Dendritic cell treated with granulocyte-macrophage colony-stimulating factor and Interleukin-4, amounts not matched to agents 40 ng/mL and 50 ng/mL, for 4 days (primary cell): ENCODE measurements at regions of chr20 and their contacts with region 1.

Region 1: DNA sequence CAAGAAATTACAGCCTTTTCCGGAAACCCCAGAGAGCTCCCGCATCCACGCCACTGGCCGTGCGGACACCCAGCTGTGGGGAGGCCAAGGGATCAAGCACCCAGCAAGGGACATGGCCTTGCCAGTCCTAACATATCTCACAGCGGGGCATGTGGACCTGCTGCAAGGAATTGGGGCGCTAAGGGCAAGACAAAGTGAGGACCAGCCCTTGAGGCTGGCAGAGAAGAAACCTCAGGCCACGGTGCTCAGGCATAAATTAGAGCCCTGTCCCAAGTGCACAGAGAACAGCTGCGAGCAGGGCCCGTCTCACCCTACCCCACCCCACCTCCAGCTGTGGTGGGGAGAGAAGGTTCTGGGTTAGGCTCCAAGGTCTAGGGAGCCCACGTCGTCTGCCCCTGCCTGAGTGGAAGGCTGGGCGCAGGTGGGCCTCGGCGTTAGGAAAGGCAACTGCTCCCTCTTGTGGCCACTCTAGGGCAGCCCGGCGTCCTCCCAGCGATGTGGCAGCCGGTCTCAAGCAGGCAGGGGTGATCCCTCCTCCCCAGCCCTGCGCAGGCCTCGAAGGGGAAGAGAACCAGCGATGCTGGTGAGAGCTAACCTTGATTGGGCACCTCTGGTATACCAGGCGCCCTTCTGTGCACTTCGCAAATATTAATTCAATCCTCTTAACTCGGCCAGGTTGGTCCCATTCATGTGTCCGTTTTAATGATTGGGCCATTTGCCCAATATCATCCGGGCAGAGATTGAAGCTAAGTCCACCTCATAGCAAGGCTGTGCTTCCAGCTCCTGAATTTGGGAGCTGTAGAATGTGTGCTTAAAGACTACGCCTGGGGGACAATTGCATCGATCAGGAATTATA is 235.8 kb downstream of the NFATC2 start:
- H3K4me3 Mint-ChIP-seq: no peak overlapping the region
- H3K27ac Mint-ChIP-seq: no peak overlapping the region
- H3K4me1 Mint-ChIP-seq: peaks cover 4% of the 10 kb centered on the region
- H3K27me3 Mint-ChIP-seq: peaks cover 14% of the 10 kb centered on the region

Region 2: DNA sequence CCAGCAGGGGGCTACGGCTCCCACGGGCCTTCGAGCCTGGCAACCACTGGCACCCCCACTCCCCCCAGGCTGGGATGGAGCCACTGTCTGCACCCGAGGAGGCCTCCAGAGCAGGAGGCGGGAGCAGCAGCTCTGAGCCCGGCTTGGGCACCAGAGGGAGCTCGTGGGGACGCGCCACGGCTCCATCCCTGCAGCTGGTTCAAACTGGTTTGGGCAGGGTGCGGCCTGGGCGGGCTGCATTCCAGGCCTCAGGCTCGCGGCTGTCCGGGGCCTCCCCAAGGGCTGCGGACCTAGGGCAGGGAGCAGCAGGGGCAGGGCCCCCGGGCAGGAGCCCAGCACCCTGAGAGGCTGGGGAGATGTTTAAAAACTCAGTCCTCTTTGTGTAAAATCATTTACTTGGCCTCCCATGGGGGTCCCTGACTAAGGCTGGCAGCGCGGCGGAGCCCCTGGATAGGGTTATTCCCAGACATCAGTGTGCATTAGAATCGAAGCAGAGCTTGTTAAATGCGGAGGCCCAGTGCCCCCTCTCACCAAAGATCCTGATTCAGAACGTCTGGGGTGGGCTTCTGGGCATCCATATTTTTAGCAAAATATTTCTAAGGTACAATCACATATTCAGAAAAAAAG is 516.0 kb before region 1 on chr20:
- intact Hi-C with region 1: loop called (anchors 10 kb)
- H3K4me3 Mint-ChIP-seq: no peak overlapping the region
- H3K27ac Mint-ChIP-seq: peak overlapping the region; percentile 75
- H3K4me1 Mint-ChIP-seq: peaks cover 17% of the 10 kb centered on the region
- H3K27me3 Mint-ChIP-seq: peaks cover 18% of the 10 kb centered on the region

Region 3: DNA sequence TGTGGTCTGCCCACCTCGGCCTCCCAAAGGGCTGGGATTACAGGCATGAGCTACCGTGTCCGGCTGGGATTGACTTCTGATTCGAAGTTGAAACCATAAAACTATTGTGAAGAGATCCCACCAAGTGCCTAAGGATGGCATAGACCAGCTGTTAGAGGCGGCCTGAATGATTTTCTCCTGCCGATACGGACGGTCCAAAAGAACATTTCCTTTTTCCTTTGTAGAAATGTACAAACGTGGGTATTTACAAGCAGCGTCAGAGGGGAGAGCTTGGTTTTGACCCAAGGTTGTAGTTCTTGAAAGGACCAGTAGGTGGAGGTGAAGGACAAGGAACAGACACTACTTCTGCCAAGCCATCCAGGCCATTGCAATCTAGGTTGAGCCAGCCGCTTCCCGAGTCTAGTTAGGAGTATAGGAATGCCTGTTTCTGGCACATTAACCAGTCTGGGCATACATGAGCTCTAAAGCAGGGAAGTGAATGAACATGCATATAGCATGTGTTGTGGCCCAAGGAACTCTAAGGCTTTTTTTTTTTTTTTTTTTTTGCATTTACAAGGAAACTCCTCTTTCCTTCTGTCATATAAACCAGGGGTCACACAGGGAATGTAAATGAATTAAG is 319.0 kb before region 1 on chr20:
- intact Hi-C with region 1: loop called (anchors 2 kb)
- H3K4me3 Mint-ChIP-seq: no peak overlapping the region
- H3K27ac Mint-ChIP-seq: no peak overlapping the region
- H3K4me1 Mint-ChIP-seq: peaks cover 7% of the 10 kb centered on the region
- H3K27me3 Mint-ChIP-seq: peaks cover 26% of the 10 kb centered on the region

Region 4: DNA sequence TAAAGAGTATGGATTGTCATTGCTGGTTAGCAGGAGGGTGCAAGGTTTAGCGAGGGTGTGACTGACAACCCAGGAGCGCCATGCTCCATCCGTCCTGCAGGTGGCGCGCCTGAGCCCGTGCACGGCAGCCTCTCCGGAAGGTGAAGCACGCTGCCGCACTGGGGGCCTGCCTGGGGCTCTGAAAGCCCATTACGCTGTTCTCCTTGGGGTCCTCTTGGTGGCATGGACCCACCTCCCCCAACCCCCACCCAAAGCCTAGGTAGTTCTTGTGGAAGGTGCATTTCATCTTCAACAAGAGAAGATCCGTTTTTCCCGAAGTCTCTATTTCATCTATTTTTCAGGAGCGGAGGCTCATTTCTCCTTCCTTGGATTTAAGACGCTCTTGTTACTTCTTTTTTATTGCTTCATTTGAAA is 86.4 kb before region 1 on chr20:
- intact Hi-C with region 1: loop called (anchors 5 kb)
- H3K4me3 Mint-ChIP-seq: no peak overlapping the region
- H3K27ac Mint-ChIP-seq: no peak overlapping the region
- H3K4me1 Mint-ChIP-seq: peaks cover 25% of the 10 kb centered on the region
- H3K27me3 Mint-ChIP-seq: peaks cover 28% of the 10 kb centered on the region

Region 5: DNA sequence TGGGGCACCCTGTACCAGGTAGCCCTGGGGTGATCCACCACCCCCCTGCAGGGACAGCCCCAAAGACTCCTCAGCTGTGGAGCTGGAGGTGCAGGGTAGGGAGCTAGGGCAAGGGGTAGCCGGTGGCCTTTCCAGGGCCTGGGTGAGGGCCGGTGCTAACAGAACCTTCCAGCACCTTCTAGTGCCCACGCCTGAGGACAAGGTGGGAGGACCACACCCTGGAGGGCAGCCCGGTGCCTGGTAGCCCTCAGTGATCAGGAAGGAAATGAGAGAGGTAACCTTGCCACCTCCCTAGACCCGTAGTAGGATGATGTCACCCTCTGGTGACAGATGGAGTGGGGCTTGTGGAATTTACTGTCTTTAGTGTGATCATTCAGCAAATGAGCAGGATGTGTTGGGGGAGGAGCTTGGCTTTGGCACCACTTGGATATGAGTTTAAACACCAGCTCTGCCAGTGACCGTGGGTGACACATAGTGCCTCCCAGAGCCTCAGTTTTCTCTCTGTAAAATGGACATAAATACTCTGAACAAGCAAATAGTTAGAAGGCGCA is 48.1 kb after region 1 on chr20:
- intact Hi-C with region 1: no loop called
- H3K4me3 Mint-ChIP-seq: no peak overlapping the region
- H3K27ac Mint-ChIP-seq: no peak overlapping the region
- H3K4me1 Mint-ChIP-seq: no peaks in the 10 kb centered on the region
- H3K27me3 Mint-ChIP-seq: peaks cover 4% of the 10 kb centered on the region

Region 6: DNA sequence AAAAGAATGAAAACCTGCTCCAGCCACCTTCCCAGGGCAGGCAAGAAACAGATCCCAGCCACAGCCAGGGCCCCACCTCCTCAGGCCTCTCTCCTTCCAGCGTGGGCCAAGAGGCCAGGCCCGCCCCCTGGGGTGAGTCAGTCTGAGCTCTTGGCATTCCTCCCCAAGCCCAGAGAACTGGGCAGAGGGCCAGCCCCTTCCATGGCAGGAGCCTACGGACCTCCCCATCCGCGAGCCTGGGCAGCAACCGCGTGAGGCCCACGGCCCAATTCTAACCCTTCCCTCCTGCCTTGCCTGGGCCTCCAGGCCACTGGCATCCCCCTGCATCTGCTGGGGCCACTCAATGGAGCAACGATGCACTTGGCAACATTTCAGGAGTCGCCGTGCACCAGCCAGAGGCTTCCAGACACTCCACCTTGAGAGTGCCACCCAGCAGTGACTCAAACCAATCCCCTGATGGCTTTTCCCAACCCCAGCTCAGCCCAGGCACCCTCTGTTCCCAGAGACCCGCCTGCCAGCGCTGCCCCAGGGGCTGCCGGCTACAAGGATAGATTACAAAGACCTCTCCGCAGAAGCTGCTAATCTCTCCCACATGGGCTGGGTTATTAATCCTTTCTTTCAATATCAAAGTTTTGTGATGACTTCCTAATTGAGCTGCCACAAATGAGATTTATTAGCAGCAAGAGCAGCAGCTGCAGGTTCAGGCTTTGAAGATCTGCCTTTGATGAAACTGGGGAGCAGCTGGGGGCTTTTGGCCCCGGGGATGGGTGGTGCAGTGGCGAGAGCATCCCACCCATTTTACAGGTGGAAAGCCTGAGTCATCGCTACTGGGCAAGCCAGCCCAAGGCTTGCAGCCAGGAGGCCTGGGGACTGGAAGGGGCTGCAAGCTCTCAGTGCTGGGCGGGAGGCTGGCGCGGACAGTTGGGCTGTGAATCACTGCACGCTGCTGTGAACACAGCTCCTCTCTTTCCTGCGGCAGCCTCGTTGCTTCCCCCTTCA is 150.1 kb after region 1 on chr20:
- intact Hi-C with region 1: no loop called
- H3K4me3 Mint-ChIP-seq: no peak overlapping the region
- H3K27ac Mint-ChIP-seq: no peak overlapping the region
- H3K4me1 Mint-ChIP-seq: peaks cover 22% of the 10 kb centered on the region
- H3K27me3 Mint-ChIP-seq: peaks cover 2% of the 10 kb centered on the region

Region 7: DNA sequence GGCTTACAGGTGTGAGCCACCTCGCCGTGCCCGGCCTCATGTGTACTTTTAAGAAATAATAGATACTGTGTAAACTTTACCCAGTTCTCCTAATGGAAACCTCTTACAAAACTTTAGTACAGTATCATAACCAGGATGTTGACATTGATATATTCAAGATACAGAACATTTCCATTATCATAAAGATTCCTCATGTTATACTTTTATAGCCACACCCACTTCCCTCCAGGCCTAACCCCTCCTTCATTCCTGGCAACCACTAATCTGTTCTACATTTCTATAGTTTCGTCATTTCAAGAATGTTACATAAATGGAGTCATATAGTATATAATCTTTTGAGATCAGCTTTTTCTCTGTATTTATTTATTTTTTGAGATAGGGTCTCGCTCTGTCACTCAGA is 548.2 kb after region 1 on chr20:
- intact Hi-C with region 1: no loop called
- H3K4me3 Mint-ChIP-seq: no peak overlapping the region
- H3K27ac Mint-ChIP-seq: no peak overlapping the region
- H3K4me1 Mint-ChIP-seq: no peaks in the 10 kb centered on the region
- H3K27me3 Mint-ChIP-seq: no peaks in the 10 kb centered on the region